Kidney (tissue), 22 donors: ENCODE measurements at regions of chr12 and their contacts with region 1.

Region 1: GRCh38 chr12:108457006-108457733 is 57.9 kb upstream of the FICD start:
- DNase-seq: peak in 3 of 5 donors; percentile 17 to 81 (median 64)
- H3K4me3 ChIP-seq: no peak overlapping the region
- H3K27ac ChIP-seq: no peak overlapping the region
- H3K4me1 ChIP-seq: peaks cover 0 to 7% (median 2%) of the 10 kb centered on the region in 3 donors
- H3K27me3 ChIP-seq: no peaks in the 10 kb centered on the region
- CTCF ChIP-seq: peak; percentile 58

Region 2: GRCh38 chr12:108099073-108099472 is 358.1 kb before region 1 on chr12:
- intact Hi-C with region 1: loop called (anchors 10 kb)
- DNase-seq: peak in 1 of 5 donors; percentile 33
- H3K4me3 ChIP-seq: no peak overlapping the region
- H3K27ac ChIP-seq: no peak overlapping the region
- H3K4me1 ChIP-seq: no peaks in the 10 kb centered on the region
- H3K27me3 ChIP-seq: no peaks in the 10 kb centered on the region
- CTCF ChIP-seq: no peak